ENCODE measurements at regions of chr14 and their contacts with region 1.

Region 1: DNA sequence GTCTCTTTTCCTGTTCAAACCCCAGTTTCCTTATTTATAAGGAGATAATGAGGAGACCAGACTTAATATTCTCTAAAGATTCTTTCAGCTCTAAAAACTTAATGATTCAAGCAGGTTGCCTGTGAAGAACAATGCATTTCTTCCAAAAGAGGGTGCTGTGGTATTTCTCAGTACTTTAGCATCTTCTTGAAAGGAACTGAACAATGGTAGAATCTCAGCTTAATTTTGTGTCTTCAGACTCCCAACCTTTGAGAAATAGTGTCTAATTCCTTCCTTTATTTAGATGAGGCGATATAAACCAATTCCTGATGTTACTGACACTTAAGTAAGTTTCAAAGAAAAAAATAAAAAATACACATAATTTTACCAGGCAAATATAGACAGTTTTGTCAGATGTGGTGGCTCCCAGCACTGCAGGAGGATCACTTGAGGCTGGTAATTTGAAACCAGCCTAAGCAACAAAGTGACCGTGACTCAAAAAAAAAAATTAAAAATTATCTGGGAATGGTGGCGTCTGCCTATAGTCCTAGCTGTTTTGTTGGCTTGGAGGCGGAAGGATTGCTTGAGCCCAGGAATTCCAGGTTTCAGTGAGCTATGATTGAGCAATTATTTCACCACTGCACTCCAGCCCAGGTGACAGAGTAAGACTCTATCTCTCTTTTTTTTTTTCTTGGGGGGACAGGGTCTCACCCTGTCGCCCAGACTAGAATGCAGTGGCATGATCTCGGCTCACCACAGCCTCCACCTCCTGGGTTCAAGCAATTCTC is 76.9 kb upstream of the PSMA6 start:
- DNase-seq: no peak
- ATAC-seq: no peak
- H3K4me3 ChIP-seq: no peak overlapping the region
- H3K27ac ChIP-seq: no peak overlapping the region
- H3K4me1 ChIP-seq: no peaks in the 10 kb centered on the region
- H3K27me3 ChIP-seq: no peaks in the 10 kb centered on the region

Region 2: DNA sequence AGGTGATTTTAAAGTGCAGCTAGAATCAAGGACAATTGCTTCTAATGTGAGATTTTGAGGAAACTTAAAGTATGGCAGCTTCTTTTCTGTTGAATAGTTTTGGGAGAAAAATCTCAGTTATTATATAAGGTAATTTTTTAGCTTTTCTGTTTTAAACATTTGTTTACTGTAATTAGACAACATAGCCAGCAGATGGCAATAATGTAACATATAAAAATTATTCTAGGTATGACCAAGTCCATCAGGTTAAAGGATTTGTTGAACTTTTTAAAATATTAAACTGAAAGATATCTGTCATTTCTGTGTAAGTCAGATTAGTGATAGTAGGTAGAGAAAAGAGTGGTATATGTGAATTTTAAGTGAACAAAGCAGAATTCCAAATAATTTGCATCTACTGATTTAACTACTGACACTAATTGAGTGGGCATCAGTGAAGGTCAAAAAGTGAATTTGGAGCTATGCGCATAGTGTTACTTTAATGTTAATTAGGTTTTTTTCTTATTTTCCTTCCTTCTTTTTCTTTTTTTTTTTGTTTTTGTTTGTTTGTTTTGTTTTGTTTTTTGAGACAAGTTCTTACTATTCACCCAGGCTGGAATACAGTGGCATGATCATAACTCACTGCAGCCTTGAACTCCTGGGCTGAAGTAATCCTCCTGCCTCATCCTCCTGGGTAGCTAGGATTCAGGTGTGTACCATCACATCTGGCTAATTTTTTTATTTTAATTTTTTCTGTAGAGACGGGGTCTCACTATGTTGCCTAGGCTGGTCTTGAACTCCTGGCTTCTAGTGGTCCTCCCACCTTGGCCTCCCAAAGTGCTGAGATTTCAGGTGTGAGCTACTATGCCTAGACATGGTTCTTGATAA is 74.3 kb before region 1 on chr14:
- intact Hi-C with region 1: loop called in 1 of 2 experiments (anchors 10 kb)
- DNase-seq: no peak
- ATAC-seq: no peak
- H3K4me3 ChIP-seq: no peak overlapping the region
- H3K27ac ChIP-seq: no peak overlapping the region
- H3K4me1 ChIP-seq: no peaks in the 10 kb centered on the region
- H3K27me3 ChIP-seq: no peaks in the 10 kb centered on the region

Region 3: DNA sequence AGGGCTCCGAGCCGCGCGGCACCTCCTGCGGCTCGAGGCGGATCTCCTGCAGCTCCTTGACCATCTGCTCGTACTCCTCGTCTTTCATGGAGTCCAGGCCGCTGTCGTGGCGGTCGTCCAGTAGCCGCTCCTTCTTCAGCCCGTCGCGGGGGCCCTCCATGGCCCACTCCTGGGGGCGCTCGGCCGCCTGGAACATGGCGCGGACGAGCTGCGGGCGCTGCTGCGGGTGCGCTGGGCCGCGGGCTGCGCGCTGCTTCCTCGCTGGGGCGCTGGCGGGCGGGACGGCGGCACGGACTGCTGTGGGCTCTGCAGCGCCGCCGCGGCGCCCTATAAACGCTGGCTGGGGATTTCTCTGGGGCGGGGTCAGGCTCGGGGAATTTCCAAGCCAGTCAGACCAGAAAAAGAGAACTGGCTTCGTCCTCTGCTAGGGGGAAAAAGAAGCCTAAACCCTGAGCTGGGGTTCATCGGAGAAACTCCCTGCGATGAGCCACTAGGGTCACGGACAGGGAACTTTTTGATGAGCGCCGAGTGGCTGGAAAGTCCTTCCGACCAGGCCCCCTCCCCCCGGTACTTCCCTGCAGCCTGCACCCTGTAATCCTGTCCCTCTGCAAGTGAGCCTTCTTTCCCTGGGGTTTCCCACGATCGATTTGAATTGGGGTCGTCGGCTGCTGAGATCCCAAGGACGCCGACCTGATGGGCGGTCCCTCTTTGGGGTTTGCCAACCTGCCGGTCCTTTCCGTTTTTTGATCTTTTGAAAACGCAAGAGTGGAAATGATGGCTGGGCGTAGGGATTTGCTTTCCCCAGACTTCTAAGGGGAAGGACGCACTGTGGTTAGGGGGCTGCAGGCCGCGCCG is 189.4 kb after region 1 on chr14 and contains the start of gene NFKBIA:
- intact Hi-C with region 1: loop called in 1 of 2 experiments (anchors 2 kb)
- DNase-seq: peak; percentile 95 to 97
- ATAC-seq: peak; percentile 89
- H3K4me3 ChIP-seq: peak within 1 kb of the TSS; percentile 94 to 97
- H3K27ac ChIP-seq: peak within 1 kb of the TSS; percentile 95 to 99
- H3K4me1 ChIP-seq: peaks cover 0 to 4% of the 10 kb centered on the region in 2 donors
- H3K27me3 ChIP-seq: no peaks in the 10 kb centered on the region
- total RNA-seq, gene NFKBIA: 126 to 186 TPM